ENCODE measurements at regions of chr7 and their contacts with region 1.

Region 1: GRCh38 chr7:116588641-116589594 is 64.1 kb downstream of the CAV1 start:
- DNase-seq: no peak
- ATAC-seq: peak; percentile 25
- H3K4me3 Mint-ChIP-seq: no peak overlapping the region
- H3K27ac Mint-ChIP-seq: no peak overlapping the region
- H3K4me1 Mint-ChIP-seq: peaks cover 23% of the 10 kb centered on the region
- H3K27me3 Mint-ChIP-seq: peaks cover 13% of the 10 kb centered on the region
- CTCF ChIP-seq: no peak

Region 2: DNA sequence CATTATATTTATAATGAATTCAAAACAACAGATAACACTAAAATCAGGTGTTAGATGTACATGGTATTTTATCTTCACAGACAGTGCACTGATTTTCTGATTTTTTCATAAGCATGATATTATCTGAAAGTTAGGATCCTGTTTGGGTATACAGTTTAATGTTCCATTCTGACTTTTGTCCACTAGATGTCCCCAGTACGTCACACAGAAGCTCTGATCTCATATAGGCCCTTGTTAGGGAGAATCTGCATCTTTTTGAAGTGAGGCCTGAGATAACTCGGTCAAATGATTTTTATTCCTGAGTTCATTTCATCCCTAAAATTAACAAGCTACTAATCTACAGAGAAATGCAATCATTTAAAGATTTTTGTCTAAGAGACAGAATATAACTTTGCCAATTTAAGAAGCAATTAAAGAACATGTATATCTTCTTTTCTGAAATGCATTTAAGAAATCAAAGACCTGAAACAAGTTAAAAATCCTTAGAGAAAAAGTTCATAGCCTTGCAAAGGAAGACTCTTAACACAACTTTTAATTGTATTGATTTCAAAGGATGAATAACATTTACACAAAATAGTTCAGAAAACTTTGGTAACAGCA is 450.6 kb before region 1 on chr7:
- CTCF ChIA-PET with region 1: interaction called, 15 read pairs
- POLR2A ChIA-PET with region 1: no interaction called
- intact Hi-C with region 1: loop called (anchors 1 kb)
- DNase-seq: no peak
- ATAC-seq: peak; percentile 91
- H3K4me3 Mint-ChIP-seq: no peak overlapping the region
- H3K27ac Mint-ChIP-seq: no peak overlapping the region
- H3K4me1 Mint-ChIP-seq: peaks cover 33% of the 10 kb centered on the region
- H3K27me3 Mint-ChIP-seq: no peaks in the 10 kb centered on the region
- CTCF ChIP-seq: peak; percentile 48

Region 3: GRCh38 chr7:116236020-116236630 is 352.8 kb before region 1 on chr7:
- CTCF ChIA-PET with region 1: interaction called, 12 read pairs
- POLR2A ChIA-PET with region 1: no interaction called
- intact Hi-C with region 1: no loop called
- DNase-seq: no peak
- ATAC-seq: peak; percentile 77
- H3K4me3 Mint-ChIP-seq: no peak overlapping the region
- H3K27ac Mint-ChIP-seq: no peak overlapping the region
- H3K4me1 Mint-ChIP-seq: peaks cover 27% of the 10 kb centered on the region
- H3K27me3 Mint-ChIP-seq: no peaks in the 10 kb centered on the region
- CTCF ChIP-seq: no peak

Region 4: DNA sequence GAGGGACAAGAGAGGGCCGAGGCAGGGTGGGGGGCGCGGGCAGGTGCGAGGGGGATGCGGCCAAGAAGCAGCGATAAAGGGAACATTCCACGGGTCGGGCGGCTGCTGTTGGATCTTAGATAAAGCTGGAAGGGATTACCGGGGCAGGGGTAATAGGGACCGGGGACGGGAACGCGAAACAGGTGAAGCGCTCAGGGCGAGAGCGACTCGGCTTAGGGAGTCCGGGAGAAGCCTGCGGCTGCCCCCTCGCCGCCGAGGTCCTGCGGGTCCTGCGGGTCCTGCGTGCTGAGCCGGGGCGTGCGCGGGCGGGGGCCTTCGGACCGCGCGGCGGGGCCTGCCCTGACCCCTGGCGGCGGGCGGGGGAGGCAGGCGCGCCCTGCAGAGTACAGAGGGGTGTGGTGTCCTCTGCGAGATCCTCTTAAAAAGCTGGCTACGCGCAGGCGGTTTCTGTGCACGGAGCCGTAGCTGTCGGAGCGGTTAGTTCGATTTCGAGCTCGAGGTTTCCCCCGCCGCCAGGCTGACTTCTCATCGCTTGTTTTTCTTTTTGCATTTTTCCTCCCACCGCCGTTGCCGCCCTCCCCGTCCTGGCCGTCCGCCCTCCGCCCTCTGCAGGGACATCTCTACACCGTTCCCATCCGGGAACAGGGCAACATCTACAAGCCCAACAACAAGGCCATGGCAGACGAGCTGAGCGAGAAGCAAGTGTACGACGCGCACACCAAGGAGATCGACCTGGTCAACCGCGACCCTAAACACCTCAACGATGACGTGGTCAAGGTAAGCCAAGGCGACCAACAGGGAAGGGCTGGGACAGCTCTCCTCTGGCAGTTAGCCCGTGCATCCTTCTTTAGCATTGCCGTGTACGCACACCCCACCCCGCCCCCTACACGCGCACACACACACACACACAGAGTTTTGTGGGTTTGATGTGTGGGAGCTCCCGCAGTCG is 62.7 kb before region 1 on chr7:
- CTCF ChIA-PET with region 1: interaction called, 34 read pairs
- POLR2A ChIA-PET with region 1: no interaction called
- intact Hi-C with region 1: loop called (anchors 1 kb)
- DNase-seq: peak; percentile 74
- ATAC-seq: peak; percentile 91
- H3K4me3 Mint-ChIP-seq: peak overlapping the region; percentile 90
- H3K27ac Mint-ChIP-seq: peak overlapping the region; percentile 71
- H3K4me1 Mint-ChIP-seq: peaks cover 19% of the 10 kb centered on the region
- H3K27me3 Mint-ChIP-seq: peaks cover 38% of the 10 kb centered on the region
- CTCF ChIP-seq: peak; percentile 68

Region 5: GRCh38 chr7:116671681-116672595 is 83.0 kb after region 1 on chr7 and contains the start of gene MET:
- CTCF ChIA-PET with region 1: interaction called, 11 read pairs
- POLR2A ChIA-PET with region 1: no interaction called
- intact Hi-C with region 1: loop called (anchors 2 kb)
- DNase-seq: peak; percentile 54
- ATAC-seq: peak; percentile 86
- H3K4me3 Mint-ChIP-seq: peak within 1 kb of the TSS; percentile 79
- H3K27ac Mint-ChIP-seq: no peak within 1 kb of the TSS
- H3K4me1 Mint-ChIP-seq: peaks cover 20% of the 10 kb centered on the region
- H3K27me3 Mint-ChIP-seq: peaks cover 64% of the 10 kb centered on the region
- CTCF ChIP-seq: no peak
- total RNA-seq, gene MET: 1.1 and 1.5 TPM in 2 replicates

Region 6: GRCh38 chr7:116809636-116810266 is 220.8 kb after region 1 on chr7:
- CTCF ChIA-PET with region 1: interaction called, 47 read pairs
- POLR2A ChIA-PET with region 1: no interaction called
- intact Hi-C with region 1: loop called (anchors 1 kb)
- DNase-seq: no peak
- ATAC-seq: peak; percentile 50
- H3K4me3 Mint-ChIP-seq: no peak overlapping the region
- H3K27ac Mint-ChIP-seq: no peak overlapping the region
- H3K4me1 Mint-ChIP-seq: no peaks in the 10 kb centered on the region
- H3K27me3 Mint-ChIP-seq: peaks cover 9% of the 10 kb centered on the region
- CTCF ChIP-seq: peak; percentile 53

Measured in activated B cell treated with CpG ODN at 0.5 μM for 24 hours (primary cell).